ENCODE measurements at regions of chr3 and their contacts with region 1.

Region 1: GRCh38 chr3:121834696-121835464 is at the starts of genes EAF2 and IQCB1:
- DNase-seq: peak; percentile 93
- ATAC-seq: peak; percentile 95
- H3K4me3 ChIP-seq: peak within 1 kb of the TSS; percentile 95
- H3K27ac ChIP-seq: peak within 1 kb of the TSS; percentile 98
- H3K4me1 ChIP-seq: peaks cover 7% of the 10 kb centered on the region; the same call in 1 of the 2 replicates
- H3K27me3 ChIP-seq: no peaks in the 10 kb centered on the region
- CTCF ChIP-seq: 0 out of 6 replicates have a peak, but pooled peaks of 2 of the 3 experiments have one; percentile 2 to 5
- EP300 ChIP-seq: no peak
- POLR2A ChIP-seq: peak; percentile 97
- RAD21 ChIP-seq: no peak
- polyA plus RNA-seq, gene EAF2: 172 to 193 TPM
- polyA plus RNA-seq, gene IQCB1: 36.0 to 45.1 TPM

Region 2: DNA sequence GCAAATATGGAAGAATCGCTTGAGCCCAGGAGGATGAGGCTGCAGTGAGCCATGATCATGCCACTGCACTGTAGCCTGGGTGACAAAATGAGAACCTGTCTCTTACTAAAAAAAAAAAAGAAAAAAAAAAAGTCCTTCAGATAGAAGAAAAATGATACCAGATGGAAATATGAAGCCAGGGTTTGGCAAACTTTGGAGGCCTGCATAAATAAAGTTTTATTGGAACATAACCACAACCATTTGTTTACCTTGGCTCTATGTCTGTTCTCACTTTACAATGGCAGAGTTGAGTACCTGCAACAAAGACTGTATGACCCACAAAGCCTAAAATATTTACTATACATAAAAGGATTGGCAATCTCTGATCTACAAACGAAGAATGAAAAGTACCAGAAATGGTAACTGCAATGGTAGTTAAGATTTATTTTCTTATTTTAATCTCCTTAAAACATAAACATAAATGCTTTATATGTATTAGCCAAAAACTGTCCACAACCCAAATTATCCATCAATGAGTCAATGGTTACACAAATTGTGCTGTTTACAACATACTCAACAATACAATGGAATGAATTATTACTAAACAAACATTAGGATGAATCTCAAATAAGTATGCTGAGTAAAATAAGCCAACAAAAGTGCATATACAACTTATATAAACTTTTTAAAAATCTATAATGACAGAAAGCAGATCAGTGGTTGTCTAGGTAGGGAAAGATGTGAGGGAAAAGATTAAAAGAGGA is 127.2 kb before region 1 on chr3:
- CTCF ChIA-PET with region 1: no interaction called
- POLR2A ChIA-PET with region 1: no interaction called
- RAD21 ChIA-PET with region 1: no interaction called
- SMC1A ChIA-PET with region 1: no interaction called
- in situ Hi-C with region 1: no loop called
- intact Hi-C with region 1: no loop called
- DNase-seq: no peak
- ATAC-seq: no peak
- H3K4me3 ChIP-seq: no peak overlapping the region
- H3K27ac ChIP-seq: no peak overlapping the region
- H3K4me1 ChIP-seq: no peaks in the 10 kb centered on the region
- H3K27me3 ChIP-seq: no peaks in the 10 kb centered on the region
- CTCF ChIP-seq: no peak
- EP300 ChIP-seq: no peak
- POLR2A ChIP-seq: no peak
- RAD21 ChIP-seq: no peak

Region 3: DNA sequence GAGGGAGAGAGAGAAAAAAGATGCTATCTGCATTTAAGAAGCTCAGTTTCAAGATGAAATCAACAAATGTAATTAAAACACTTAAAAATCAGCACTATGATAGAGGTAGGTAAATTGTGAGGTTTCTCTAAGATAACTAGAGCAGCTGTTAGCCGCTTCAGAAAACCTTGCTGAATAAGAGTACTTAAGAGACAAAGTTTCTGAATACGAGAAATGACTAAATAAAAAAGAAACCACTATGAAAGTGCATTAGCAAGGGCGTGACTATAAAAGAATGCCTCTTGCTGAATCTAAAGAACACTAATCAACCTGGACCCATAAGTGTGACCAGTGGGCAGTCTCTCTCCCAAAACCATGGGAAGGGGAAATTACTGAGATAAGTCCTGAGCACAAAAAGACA is 41.8 kb before region 1 on chr3:
- CTCF ChIA-PET with region 1: interaction called, 5 read pairs
- POLR2A ChIA-PET with region 1: interaction called, 4 read pairs
- RAD21 ChIA-PET with region 1: interaction called, 20 read pairs
- SMC1A ChIA-PET with region 1: interaction called, 21 read pairs
- in situ Hi-C with region 1: no loop called
- intact Hi-C with region 1: no loop called
- DNase-seq: no peak
- ATAC-seq: peak; percentile 69
- H3K4me3 ChIP-seq: peak overlapping the region; percentile 42
- H3K27ac ChIP-seq: peak overlapping the region; percentile 66
- H3K4me1 ChIP-seq: peaks cover 29% of the 10 kb centered on the region
- H3K27me3 ChIP-seq: no peaks in the 10 kb centered on the region
- CTCF ChIP-seq: no peak
- EP300 ChIP-seq: 0 out of 4 replicates have a peak, but pooled peaks of 1 of the 2 experiments have one; percentile 12
- POLR2A ChIP-seq: no peak
- RAD21 ChIP-seq: no peak

Region 4: GRCh38 chr3:121817753-121818152 is 17.1 kb before region 1 on chr3:
- CTCF ChIA-PET with region 1: interaction called, 6 read pairs
- POLR2A ChIA-PET with region 1: interaction called, 6 read pairs
- RAD21 ChIA-PET with region 1: no interaction called
- SMC1A ChIA-PET with region 1: interaction called, 171 read pairs
- in situ Hi-C with region 1: no loop called
- intact Hi-C with region 1: no loop called
- DNase-seq: no peak
- ATAC-seq: no peak
- H3K4me3 ChIP-seq: no peak overlapping the region
- H3K27ac ChIP-seq: no peak overlapping the region
- H3K4me1 ChIP-seq: no peaks in the 10 kb centered on the region
- H3K27me3 ChIP-seq: no peaks in the 10 kb centered on the region
- CTCF ChIP-seq: no peak
- EP300 ChIP-seq: no peak
- POLR2A ChIP-seq: no peak
- RAD21 ChIP-seq: no peak

Region 5: DNA sequence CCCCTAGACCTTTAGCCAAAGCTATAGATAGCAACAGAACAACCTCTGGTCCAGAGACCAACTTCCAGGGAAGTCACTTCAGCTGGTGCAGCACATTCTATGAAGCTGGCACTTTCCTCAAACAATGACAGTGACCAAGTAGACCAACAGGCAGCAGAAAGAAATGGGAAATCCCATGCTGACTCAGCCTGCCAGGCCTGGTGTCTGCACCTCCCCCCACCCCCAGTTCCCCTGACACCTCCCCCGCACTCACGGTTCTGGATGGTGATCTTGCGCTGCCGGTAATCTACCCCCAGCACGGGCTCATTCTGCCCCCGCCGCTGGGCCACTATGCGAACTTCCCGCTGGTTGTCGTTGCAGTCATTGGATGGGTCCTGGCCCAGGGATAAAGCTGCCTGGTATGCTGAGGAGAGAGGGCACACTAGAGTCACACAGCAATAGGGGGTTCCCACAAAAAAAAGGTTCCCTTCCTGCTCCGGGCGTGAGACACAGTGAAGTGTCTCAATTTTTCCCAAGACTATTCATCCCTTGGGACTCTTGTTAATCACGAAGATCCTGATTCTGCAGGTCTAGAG is 170.2 kb after region 1 on chr3:
- CTCF ChIA-PET with region 1: no interaction called
- POLR2A ChIA-PET with region 1: interaction called, 5 read pairs
- RAD21 ChIA-PET with region 1: no interaction called
- SMC1A ChIA-PET with region 1: interaction called, 3 read pairs
- in situ Hi-C with region 1: no loop called
- intact Hi-C with region 1: loop called (anchors 5 kb)
- DNase-seq: peak; percentile 74
- ATAC-seq: peak; percentile 78
- H3K4me3 ChIP-seq: peak overlapping the region; percentile 46; the same call in 1 of the 2 replicates
- H3K27ac ChIP-seq: peak overlapping the region; percentile 91
- H3K4me1 ChIP-seq: peaks cover 58% of the 10 kb centered on the region
- H3K27me3 ChIP-seq: no peaks in the 10 kb centered on the region
- CTCF ChIP-seq: 0 out of 6 replicates have a peak, but pooled peaks of 1 of the 3 experiments have one; percentile 3
- EP300 ChIP-seq: peak; percentile 11 to 65; a peak in 3 of 4 replicates
- POLR2A ChIP-seq: 0 out of 2 replicates have a peak, but pooled peaks have one; percentile 35
- RAD21 ChIP-seq: no peak

Region 6: DNA sequence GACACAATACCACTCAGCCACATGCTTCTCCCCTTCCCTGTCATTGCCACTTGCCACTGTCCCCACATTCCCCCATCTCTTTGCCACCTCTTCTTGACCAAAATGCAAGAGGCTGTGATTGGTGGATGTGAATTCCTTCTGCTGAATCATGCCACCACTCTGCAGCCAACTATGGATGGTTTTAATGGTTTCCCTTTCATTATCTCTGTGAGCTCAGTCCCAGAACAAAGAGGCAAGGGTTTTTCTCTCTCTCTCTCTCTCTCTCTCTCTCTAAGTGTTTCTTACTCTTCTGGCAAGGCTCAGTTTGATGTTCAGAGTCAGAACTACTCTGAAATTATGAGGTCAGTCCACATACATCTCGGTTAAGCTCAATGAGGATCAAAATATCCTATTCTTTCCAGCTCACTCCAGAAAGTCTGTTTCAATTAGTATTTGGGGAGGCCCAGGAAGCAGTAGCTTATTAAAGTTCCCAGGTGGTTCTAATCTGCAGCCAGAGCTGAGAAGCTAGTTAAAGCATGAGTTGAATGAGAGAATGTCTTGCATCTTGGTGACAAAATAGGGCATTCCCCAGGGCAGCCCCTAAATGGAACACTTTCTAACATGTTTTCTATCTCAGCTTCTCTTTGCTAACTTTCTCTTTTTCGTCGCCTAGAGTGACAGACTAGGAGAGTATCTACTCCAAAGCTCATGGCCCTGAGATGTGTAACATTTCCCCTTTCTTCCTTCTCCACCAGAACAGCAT is 195.7 kb after region 1 on chr3:
- CTCF ChIA-PET with region 1: no interaction called
- POLR2A ChIA-PET with region 1: no interaction called
- RAD21 ChIA-PET with region 1: no interaction called
- SMC1A ChIA-PET with region 1: no interaction called
- in situ Hi-C with region 1: no loop called
- intact Hi-C with region 1: no loop called
- DNase-seq: peak; percentile 74
- ATAC-seq: peak; percentile 86
- H3K4me3 ChIP-seq: peak overlapping the region; percentile 41; the same call in 1 of the 2 replicates
- H3K27ac ChIP-seq: peak overlapping the region; percentile 89
- H3K4me1 ChIP-seq: peaks cover 37% of the 10 kb centered on the region
- H3K27me3 ChIP-seq: no peaks in the 10 kb centered on the region
- CTCF ChIP-seq: no peak
- EP300 ChIP-seq: no peak
- POLR2A ChIP-seq: 0 out of 2 replicates have a peak, but pooled peaks have one; percentile 25
- RAD21 ChIP-seq: peak; percentile 11; the same call in 1 of the 2 replicates